Naive thymus-derived CD4-positive, alpha-beta T cell (primary cell): ENCODE measurements at regions of chr5 and their contacts with region 1.

Region 1: GRCh38 chr5:175534070-175534932 is 55.9 kb downstream of the SFXN1 start:
- DNase-seq: peak; percentile 72 to 86 (median 83)
- ATAC-seq: peak; percentile 99
- H3K4me3 ChIP-seq: peak overlapping the region; percentile 40
- H3K4me3 Mint-ChIP-seq: peak overlapping the region; percentile 75 to 84 (median 77)
- H3K27ac ChIP-seq: no peak overlapping the region
- H3K27ac Mint-ChIP-seq: peak overlapping the region in 5 of 9 donors; percentile 15 to 71 (median 53)
- H3K4me1 ChIP-seq: peaks cover 4 to 16% of the 10 kb centered on the region in 2 donors
- H3K4me1 Mint-ChIP-seq: peaks cover 13 to 51% (median 30%) of the 10 kb centered on the region in 7 donors
- H3K27me3 ChIP-seq: no peaks in the 10 kb centered on the region
- H3K27me3 Mint-ChIP-seq: no peaks in the 10 kb centered on the region

Region 2: DNA sequence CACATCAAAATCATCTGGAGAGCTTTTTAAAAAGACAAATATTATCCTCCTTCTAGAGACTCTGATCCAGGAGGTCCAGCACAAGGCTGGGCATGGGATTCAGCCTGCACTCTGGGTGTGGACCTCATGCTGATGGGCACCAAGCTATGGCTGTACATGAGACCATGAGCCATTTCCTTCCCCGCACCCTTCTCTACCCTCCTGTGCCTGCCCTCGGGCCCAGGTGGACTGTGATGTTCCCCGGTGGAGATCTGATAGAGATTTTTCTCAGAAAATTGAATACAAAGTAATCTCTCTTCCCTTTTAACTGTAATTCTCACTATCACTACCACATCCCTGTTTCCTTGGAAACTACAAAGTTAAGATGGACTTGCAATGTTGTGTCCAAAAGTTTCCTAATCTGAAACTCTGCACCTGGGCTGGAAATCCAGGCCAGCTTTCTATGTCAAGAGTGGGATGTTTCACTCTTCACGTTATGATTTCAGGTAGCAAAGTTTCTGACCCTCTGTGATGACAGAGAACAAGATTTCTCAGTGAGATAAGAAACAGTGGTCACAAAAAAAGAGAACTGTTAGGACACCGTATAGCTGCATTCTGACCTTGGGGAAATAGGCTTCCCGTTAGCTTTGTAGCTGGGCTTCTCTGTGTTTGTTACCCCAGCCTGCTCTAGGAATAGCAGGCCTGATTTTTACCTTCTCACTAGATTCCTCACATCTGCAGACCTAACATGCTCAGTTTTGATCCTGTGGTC is 44.4 kb before region 1 on chr5:
- CTCF ChIA-PET with region 1: interaction called, 12 read pairs
- POLR2A ChIA-PET with region 1: no interaction called
- intact Hi-C with region 1: no loop called
- DNase-seq: no peak
- ATAC-seq: peak; percentile 64
- H3K4me3 ChIP-seq: no peak overlapping the region
- H3K4me3 Mint-ChIP-seq: peak overlapping the region in 4 of 10 donors; percentile 0 to 31 (median 19)
- H3K27ac ChIP-seq: peak overlapping the region; percentile 19
- H3K27ac Mint-ChIP-seq: peak overlapping the region in 7 of 9 donors; percentile 29 to 82 (median 49)
- H3K4me1 ChIP-seq: peaks cover 6 to 10% of the 10 kb centered on the region in 2 donors
- H3K4me1 Mint-ChIP-seq: peaks cover 46 to 77% (median 68%) of the 10 kb centered on the region in 7 donors
- H3K27me3 ChIP-seq: no peaks in the 10 kb centered on the region
- H3K27me3 Mint-ChIP-seq: no peaks in the 10 kb centered on the region

Region 3: DNA sequence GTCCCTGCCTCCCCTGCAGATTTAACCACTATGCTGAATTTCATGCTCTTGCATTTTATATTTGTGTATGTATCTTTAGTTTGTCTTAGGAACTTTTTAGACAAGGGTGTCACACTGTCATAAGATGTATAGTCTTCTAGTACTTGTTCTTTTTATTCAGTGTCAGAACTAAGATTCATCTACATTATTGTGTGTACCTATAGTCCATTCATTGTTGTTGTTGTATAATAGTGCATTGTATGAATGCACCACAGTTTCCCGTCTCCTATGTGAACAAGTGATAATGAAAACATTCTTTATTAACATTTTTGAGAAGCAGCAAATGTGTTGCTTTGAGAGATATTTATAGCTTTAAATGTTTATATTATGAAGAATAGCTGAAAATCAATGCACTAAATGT is 10.1 kb before region 1 on chr5:
- CTCF ChIA-PET with region 1: interaction called, 15 read pairs
- POLR2A ChIA-PET with region 1: interaction called, 3 read pairs
- intact Hi-C with region 1: loop called (anchors 1 kb)
- DNase-seq: no peak
- ATAC-seq: no peak
- H3K4me3 ChIP-seq: no peak overlapping the region
- H3K4me3 Mint-ChIP-seq: peak overlapping the region in 7 of 10 donors; percentile 1 to 65 (median 61)
- H3K27ac ChIP-seq: no peak overlapping the region
- H3K27ac Mint-ChIP-seq: peak overlapping the region in 8 of 9 donors; percentile 59 to 97 (median 81)
- H3K4me1 ChIP-seq: peaks cover 31 to 43% of the 10 kb centered on the region in 2 donors
- H3K4me1 Mint-ChIP-seq: peaks cover 35 to 64% (median 59%) of the 10 kb centered on the region in 7 donors
- H3K27me3 ChIP-seq: no peaks in the 10 kb centered on the region
- H3K27me3 Mint-ChIP-seq: no peaks in the 10 kb centered on the region

Region 4: GRCh38 chr5:175657593-175658271 is 123.4 kb after region 1 on chr5 and contains the start of gene HRH2:
- CTCF ChIA-PET with region 1: interaction called, 27 read pairs
- POLR2A ChIA-PET with region 1: interaction called, 5 read pairs
- intact Hi-C with region 1: loop called (anchors 1 to 2 kb)
- DNase-seq: peak; percentile 20 to 69 (median 46)
- ATAC-seq: peak; percentile 71
- H3K4me3 ChIP-seq: peak within 1 kb of the TSS; percentile 70
- H3K4me3 Mint-ChIP-seq: peak within 1 kb of the TSS; percentile 84 to 100 (median 96)
- H3K27ac ChIP-seq: peak within 1 kb of the TSS; percentile 71
- H3K27ac Mint-ChIP-seq: peak within 1 kb of the TSS; percentile 80 to 94 (median 88)
- H3K4me1 ChIP-seq: peaks cover 41 to 59% of the 10 kb centered on the region in 2 donors
- H3K4me1 Mint-ChIP-seq: peaks cover 77 to 98% (median 92%) of the 10 kb centered on the region in 7 donors
- H3K27me3 ChIP-seq: no peaks in the 10 kb centered on the region
- H3K27me3 Mint-ChIP-seq: peaks cover 0 to 2% (median 0%) of the 10 kb centered on the region in 5 donors
- total RNA-seq, gene HRH2: 5.6 to 26.3 (median 12.9) TPM

Region 5: DNA sequence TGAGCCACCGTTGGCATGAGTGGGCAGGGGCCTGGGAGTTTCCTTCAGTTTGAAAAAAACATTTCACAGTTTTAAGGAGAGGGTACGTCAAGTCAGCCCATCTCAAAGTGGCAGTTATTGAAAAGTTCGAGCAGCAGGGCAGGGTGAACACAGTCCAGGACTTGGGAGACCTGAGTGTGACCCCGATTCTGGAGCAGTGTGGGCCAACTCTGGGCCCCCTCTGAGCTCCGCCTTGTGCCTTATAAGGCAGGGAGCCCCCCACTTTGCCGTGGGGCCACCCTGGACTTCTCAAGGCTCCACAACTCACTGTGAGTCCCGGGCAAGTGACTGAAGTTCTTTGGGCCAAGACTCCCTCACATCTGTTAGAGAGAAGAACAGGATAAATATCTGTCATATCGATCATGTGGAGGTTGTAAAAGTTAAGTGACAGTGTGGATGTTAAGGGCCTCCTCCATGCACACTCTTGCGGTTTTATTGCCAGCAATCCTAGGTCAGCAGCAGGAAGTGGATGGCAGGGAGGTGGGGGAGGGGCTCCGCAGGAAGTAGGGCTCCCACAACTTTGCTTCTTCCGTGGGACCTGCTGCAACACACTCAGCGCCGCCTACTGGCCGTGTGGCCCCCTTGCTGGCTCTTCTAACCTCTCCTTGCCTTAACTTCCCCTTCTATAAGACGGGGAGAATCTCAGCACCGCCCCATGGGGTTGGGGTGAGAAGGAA is 162.0 kb after region 1 on chr5:
- CTCF ChIA-PET with region 1: interaction called, 153 read pairs
- POLR2A ChIA-PET with region 1: interaction called, 6 read pairs
- intact Hi-C with region 1: loop called (anchors 1 kb)
- DNase-seq: peak; percentile 50 to 77 (median 73)
- ATAC-seq: peak; percentile 86
- H3K4me3 ChIP-seq: peak overlapping the region; percentile 10
- H3K4me3 Mint-ChIP-seq: peak overlapping the region; percentile 25 to 81 (median 67)
- H3K27ac ChIP-seq: peak overlapping the region; percentile 38
- H3K27ac Mint-ChIP-seq: peak overlapping the region; percentile 72 to 92 (median 87)
- H3K4me1 ChIP-seq: peaks cover 8 to 11% of the 10 kb centered on the region in 2 donors
- H3K4me1 Mint-ChIP-seq: peaks cover 31 to 56% (median 53%) of the 10 kb centered on the region in 7 donors
- H3K27me3 ChIP-seq: no peaks in the 10 kb centered on the region
- H3K27me3 Mint-ChIP-seq: no peaks in the 10 kb centered on the region

Region 6: GRCh38 chr5:175729829-175730277 is 195.6 kb after region 1 on chr5:
- CTCF ChIA-PET with region 1: interaction called, 12 read pairs
- POLR2A ChIA-PET with region 1: no interaction called
- intact Hi-C with region 1: no loop called
- DNase-seq: peak; percentile 79 to 95 (median 90)
- ATAC-seq: peak; percentile 95
- H3K4me3 ChIP-seq: no peak overlapping the region
- H3K4me3 Mint-ChIP-seq: peak overlapping the region in 4 of 10 donors; percentile 1 to 15 (median 10)
- H3K27ac ChIP-seq: no peak overlapping the region
- H3K27ac Mint-ChIP-seq: peak overlapping the region in 1 of 9 donors; percentile 41
- H3K4me1 ChIP-seq: peaks cover 0 to 3% of the 10 kb centered on the region in 2 donors
- H3K4me1 Mint-ChIP-seq: peaks cover 0 to 9% (median 7%) of the 10 kb centered on the region in 7 donors
- H3K27me3 ChIP-seq: no peaks in the 10 kb centered on the region
- H3K27me3 Mint-ChIP-seq: peaks cover 13 to 39% (median 22%) of the 10 kb centered on the region in 5 donors

Region 7: DNA sequence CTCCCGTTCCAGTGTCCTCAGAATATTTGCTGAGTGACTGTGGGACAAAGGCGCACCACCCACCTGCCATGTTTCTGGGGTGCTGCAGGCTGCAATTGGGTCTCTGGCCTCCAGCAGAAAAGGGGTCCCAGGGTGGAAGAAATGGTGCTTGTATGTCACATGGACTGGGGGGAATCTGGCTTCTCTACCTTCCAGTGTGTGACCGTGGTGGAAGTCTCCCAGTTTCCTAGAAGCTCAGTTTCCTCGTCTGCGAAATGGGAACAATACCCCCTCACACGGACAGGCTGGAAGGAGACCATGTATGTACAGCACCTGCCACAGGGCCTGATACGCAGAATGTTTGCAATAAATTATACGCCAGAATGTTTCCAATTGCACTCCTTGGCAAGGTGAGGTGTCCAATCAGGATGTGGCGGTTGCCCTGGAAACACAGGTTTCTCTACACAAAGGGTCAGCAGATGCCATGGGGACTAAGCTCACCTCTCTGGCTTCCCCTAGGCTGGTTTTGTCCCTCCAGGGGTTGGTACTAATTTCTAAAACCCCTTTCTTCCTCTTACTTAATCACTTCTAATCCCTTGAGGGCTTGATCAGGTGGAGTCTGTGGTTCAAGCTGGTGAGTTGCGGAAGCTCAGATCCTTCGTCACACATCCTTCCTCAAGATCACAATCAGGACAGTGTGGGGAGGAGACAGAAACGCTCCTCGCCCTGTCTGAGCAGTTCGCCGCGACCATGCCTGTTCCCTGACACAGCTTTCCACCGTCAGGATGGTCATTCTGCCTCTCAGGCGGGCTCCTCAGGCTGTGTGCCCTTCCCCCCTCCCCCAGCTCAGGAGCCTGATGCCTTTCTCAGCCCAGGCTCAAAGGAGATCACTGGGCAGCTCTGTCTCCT is 361.2 kb after region 1 on chr5:
- CTCF ChIA-PET with region 1: no interaction called
- POLR2A ChIA-PET with region 1: no interaction called
- intact Hi-C with region 1: loop called in 1 of 2 experiments (anchors 10 kb)
- DNase-seq: peak in 8 of 9 donors; percentile 30 to 71 (median 55)
- ATAC-seq: peak; percentile 96
- H3K4me3 ChIP-seq: peak overlapping the region; percentile 25
- H3K4me3 Mint-ChIP-seq: peak overlapping the region; percentile 47 to 85 (median 75)
- H3K27ac ChIP-seq: no peak overlapping the region
- H3K27ac Mint-ChIP-seq: peak overlapping the region in 6 of 9 donors; percentile 1 to 86 (median 57)
- H3K4me1 ChIP-seq: peaks cover 11 to 23% of the 10 kb centered on the region in 2 donors
- H3K4me1 Mint-ChIP-seq: peaks cover 9 to 40% (median 29%) of the 10 kb centered on the region in 7 donors
- H3K27me3 ChIP-seq: no peaks in the 10 kb centered on the region
- H3K27me3 Mint-ChIP-seq: peaks cover 0 to 44% (median 5%) of the 10 kb centered on the region in 5 donors